CD14-positive monocyte (primary cell): ENCODE measurements at regions of chr12 and their contacts with region 1.

Region 1: GRCh38 chr12:89542912-89543592 is 17.2 kb upstream of the POC1B start:
- DNase-seq: peak; percentile 47 to 69 (median 63)
- H3K4me3 ChIP-seq: no peak overlapping the region
- H3K4me3 Mint-ChIP-seq: peak overlapping the region in 1 of 2 donors; percentile 31
- H3K27ac ChIP-seq: no peak overlapping the region
- H3K27ac Mint-ChIP-seq: peak overlapping the region in 1 of 7 donors; percentile 56
- H3K4me1 ChIP-seq: peaks cover 5 to 7% of the 10 kb centered on the region in 2 donors
- H3K4me1 Mint-ChIP-seq: peaks cover 15% of the 10 kb centered on the region
- H3K27me3 ChIP-seq: no peaks in the 10 kb centered on the region
- H3K27me3 Mint-ChIP-seq: peaks cover 0 to 5% (median 0%) of the 10 kb centered on the region in 3 donors
- CTCF ChIP-seq: peak; percentile 94

Region 2: GRCh38 chr12:89610366-89610765 is 67.3 kb after region 1 on chr12:
- intact Hi-C with region 1: no loop called
- DNase-seq: no peak
- H3K4me3 ChIP-seq: no peak overlapping the region
- H3K4me3 Mint-ChIP-seq: no peak overlapping the region
- H3K27ac ChIP-seq: no peak overlapping the region
- H3K27ac Mint-ChIP-seq: no peak overlapping the region
- H3K4me1 ChIP-seq: no peaks in the 10 kb centered on the region
- H3K4me1 Mint-ChIP-seq: no peaks in the 10 kb centered on the region
- H3K27me3 ChIP-seq: no peaks in the 10 kb centered on the region
- H3K27me3 Mint-ChIP-seq: no peaks in the 10 kb centered on the region
- CTCF ChIP-seq: no peak

Region 3: DNA sequence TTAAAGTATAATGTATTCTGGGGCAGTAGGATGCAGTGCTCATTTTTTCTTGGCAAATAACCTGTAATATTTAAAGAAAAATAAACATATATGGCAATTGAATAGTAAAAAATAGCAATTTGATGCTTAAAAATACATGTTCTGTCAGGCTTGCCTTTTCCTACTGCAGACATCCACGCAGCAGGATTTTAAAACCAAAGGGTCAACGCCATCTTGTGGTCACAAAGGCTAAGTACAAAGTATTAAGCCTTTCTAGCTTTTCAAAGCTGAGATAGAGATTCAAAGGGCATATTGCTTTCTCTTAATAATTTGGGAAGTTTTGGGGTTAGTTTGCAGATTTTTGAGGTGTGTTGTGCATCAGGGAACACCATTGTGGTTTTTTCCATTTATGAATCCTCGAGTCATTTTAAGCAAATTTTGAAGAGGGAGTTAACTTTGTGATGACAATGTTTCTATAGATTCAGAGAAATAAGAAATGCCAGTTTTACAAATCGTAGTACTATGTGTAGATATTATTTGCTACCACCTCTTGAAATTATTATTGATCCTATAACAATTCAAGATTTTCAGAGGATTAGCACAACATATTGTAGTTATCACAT is 1416.6 kb after region 1 on chr12:
- intact Hi-C with region 1: loop called (anchors 5 to 10 kb)
- DNase-seq: peak in 2 of 3 donors; percentile 16 to 21
- H3K4me3 ChIP-seq: no peak overlapping the region
- H3K4me3 Mint-ChIP-seq: no peak overlapping the region
- H3K27ac ChIP-seq: no peak overlapping the region
- H3K27ac Mint-ChIP-seq: no peak overlapping the region
- H3K4me1 ChIP-seq: no peaks in the 10 kb centered on the region
- H3K4me1 Mint-ChIP-seq: no peaks in the 10 kb centered on the region
- H3K27me3 ChIP-seq: no peaks in the 10 kb centered on the region
- H3K27me3 Mint-ChIP-seq: no peaks in the 10 kb centered on the region
- CTCF ChIP-seq: peak; percentile 80